Posterior vena cava (tissue), 2 donors: ENCODE measurements at regions of chr13 and their contacts with region 1.

Region 1: DNA sequence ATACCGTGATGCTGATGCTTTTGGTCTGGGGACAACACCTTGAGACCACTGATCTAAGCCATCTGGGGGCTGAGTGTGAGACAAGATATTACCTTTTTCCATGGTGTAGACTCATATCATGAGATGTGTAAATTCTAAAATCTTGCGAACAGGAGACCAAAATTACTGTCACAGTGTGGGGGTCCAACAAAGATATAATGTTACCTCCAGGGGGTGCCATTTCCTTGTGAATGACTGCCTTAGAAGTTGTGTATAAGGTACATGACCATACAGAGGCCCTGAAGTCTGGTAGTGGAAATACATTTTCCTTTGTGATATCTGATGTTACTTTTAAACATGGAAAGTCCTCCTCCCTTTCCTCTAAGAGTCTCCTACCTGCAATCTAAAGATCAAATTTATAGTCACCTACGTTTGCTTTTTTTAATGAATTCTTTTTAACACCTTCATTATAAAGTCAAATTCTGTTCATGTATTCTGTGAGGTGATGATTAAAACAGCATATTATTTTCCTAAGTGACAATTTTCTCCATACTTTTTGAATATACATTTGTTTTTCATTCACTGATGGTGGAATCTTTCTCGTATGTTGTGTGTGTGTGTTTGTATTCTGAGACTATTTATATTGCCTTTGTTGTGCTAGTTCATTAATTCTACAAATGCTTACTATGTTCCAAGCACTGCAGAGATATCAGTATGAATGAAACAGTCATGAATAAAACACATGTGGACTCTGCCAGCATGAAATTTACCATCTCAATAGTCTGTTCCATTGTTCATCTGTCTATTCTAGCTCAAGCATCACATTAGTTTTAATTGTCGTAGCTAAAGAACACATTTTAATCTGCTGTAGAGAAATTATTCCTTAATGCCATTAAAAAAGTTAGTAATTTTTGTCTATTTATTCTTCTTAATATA is 113.7 kb downstream of the RFC3 start:
- DNase-seq: no peak

Region 2: DNA sequence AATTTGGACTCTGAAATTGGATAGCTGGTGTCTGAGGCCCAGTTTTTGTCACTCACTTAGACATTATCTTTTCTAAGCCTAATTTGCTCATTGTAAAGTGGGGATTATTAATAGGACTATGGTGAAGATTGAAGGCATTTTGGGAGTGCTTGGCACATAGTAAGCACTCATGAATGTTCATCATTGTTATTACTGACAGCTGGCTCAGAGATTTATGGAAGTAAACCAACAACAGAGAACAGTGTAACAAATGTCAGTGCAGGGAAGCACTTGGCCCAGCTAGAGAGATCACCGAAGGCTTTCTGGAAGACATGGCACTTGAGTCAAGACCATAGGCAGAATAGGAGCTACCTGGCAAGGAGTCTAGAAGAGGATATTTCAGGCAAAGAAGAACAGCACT is 21.4 kb before region 1 on chr13:
- intact Hi-C with region 1: no loop called
- DNase-seq: no peak

Region 3: GRCh38 chr13:35157143-35157755 is 1225.6 kb after region 1 on chr13:
- intact Hi-C with region 1: loop called in 1 of 2 experiments (anchors 10 kb)
- DNase-seq: no peak